ENCODE measurements at regions of chr16 and their contacts with region 1.

Region 1: DNA sequence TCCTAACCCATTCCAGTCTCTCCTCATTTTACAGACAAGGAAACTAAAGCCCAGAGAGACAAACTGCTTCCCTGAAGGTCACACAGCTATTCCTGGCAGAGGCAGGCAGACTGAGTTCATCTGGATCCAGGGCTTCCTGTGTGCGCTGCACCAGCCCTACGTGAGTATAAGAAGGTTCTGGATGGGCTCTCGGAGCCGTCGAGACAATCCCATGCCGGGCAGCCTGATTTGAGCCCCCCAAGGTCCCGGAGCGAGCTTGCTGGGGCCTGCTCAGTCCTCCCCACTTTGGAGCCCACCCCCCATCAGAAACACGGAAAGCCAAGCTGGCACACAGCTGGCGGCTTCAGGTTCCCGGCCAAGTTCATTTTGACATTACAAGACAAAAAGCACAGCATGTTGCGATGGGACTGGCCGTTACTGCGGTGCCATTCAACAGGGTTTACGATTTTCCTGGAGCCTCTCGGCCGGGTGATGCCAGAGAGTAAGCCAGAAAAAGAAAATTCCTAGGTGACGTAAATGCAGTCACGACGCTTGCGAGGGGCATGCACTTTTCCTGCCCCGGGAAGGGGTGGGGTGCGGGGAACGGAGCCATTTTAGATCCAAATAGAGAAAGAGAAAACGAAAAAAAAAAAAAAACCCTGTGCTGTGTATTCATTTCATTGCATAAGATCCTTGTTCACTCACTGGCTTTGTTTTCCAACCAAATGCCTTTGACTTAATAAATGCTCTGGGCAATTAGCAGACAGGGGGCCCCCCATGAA is 167.1 kb upstream of the FOXF1 start:
- DNase-seq: peak; percentile 97
- H3K4me3 ChIP-seq: peak overlapping the region; percentile 1 to 22 (median 8)
- H3K27ac ChIP-seq: peak overlapping the region; percentile 87 to 96 (median 94)
- H3K4me1 ChIP-seq: peaks cover 0 to 43% (median 40%) of the 10 kb centered on the region in 4 donors
- H3K27me3 ChIP-seq: no peaks in the 10 kb centered on the region
- CTCF ChIP-seq: no peak
- EP300 ChIP-seq: peak; percentile 98 to 100 (median 99)
- POLR2A ChIP-seq: no peak

Region 2: GRCh38 chr16:86078121-86078600 is 265.0 kb before region 1 on chr16:
- intact Hi-C with region 1: loop called (anchors 2 kb)
- DNase-seq: peak; percentile 95
- H3K4me3 ChIP-seq: no peak overlapping the region
- H3K27ac ChIP-seq: peak overlapping the region in 3 of 4 donors; percentile 81 to 89 (median 86)
- H3K4me1 ChIP-seq: peaks cover 0 to 24% (median 15%) of the 10 kb centered on the region in 4 donors
- H3K27me3 ChIP-seq: no peaks in the 10 kb centered on the region
- CTCF ChIP-seq: no peak
- EP300 ChIP-seq: peak; percentile 92 to 97 (median 95)
- POLR2A ChIP-seq: no peak

Region 3: DNA sequence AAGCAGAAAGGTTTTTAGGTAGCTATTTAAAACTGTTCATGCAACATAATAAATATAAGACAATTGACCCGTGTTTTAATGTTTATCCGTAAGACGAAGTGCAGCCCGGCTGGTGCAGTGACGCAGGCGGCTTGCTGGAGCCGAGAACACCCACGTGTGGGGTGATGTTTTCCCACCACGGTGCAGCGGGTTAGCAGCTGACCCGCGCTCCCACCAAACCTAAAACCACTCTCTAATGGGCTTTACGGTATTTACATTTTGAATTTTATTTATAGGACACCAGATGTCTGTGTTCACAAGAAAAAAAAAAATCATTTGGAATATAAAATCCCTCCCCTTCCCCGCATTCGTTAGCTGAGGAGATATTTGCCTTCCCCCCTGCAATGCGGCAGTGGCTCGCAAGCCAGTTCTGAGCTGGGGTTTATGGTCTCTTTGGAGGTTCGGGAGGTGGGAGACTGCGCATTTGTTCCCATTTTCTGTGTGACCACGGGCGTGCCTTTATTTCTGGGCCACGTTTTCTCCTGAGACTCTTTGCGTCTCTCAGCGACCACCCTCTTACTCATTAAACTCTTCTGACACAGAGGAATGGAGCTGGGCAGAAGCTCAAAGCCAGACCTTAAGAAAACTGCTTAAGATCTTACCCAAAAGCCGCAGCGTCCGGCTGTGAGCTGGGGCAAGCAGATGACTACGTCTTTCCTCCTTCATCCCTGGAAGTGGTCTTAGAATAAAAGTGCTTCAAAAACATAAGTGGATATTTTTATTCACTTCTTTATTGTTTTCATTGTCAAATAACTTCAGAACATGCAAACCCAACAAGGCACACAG is 143.1 kb before region 1 on chr16:
- intact Hi-C with region 1: loop called (anchors 2 kb)
- DNase-seq: peak; percentile 96
- H3K4me3 ChIP-seq: peak overlapping the region; percentile 12 to 43 (median 32)
- H3K27ac ChIP-seq: peak overlapping the region; percentile 87 to 96 (median 92)
- H3K4me1 ChIP-seq: peaks cover 0 to 54% (median 47%) of the 10 kb centered on the region in 4 donors
- H3K27me3 ChIP-seq: no peaks in the 10 kb centered on the region
- CTCF ChIP-seq: no peak
- EP300 ChIP-seq: peak; percentile 95 to 99 (median 98)
- POLR2A ChIP-seq: no peak

Region 4: DNA sequence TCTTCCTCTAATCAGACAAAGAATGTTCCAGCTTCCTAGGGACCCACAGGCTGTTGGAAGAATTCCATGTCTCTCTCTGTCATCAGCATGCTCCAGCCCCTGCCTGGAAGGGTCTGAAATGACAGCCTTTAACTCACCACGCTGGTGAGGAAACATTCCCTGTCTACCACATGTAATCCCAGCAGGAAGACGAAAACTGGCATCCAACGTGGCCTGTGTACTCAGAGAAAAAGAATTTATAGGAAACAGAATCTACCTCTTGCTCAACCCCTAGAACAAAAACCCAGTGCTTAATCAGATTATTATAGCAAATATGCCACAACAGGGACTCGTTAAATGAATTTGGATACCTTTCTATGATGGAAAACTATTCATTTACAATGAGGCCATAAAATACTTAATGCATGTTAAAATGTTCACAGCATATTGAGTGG is 19.9 kb after region 1 on chr16:
- intact Hi-C with region 1: loop called (anchors 1 kb)
- DNase-seq: peak; percentile 88
- H3K4me3 ChIP-seq: no peak overlapping the region
- H3K27ac ChIP-seq: peak overlapping the region; percentile 83 to 89 (median 85)
- H3K4me1 ChIP-seq: peaks cover 0 to 56% (median 46%) of the 10 kb centered on the region in 4 donors
- H3K27me3 ChIP-seq: no peaks in the 10 kb centered on the region
- CTCF ChIP-seq: no peak
- EP300 ChIP-seq: peak in 3 of 4 donors; percentile 25 to 84 (median 52)
- POLR2A ChIP-seq: no peak

Region 5: DNA sequence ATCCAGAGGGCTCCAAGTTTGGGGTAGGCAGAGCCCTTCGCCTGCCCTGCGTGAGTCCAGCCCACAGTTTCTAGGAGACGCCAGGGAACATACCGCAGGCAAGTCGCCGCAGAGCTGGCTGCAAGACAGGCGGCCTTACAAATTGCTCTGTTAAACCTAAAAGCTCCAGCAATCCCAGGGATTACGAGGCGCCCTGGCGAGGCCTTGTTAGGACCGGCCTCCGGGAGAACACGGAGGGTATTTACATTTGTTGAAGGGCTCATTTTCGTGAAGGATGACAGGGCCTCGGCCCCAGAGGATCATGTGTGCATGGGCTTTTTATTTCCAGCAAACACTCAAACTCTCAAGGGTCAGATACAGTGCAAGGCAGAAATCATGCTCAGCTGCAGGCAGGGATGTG is 89.5 kb after region 1 on chr16:
- intact Hi-C with region 1: loop called (anchors 2 kb)
- DNase-seq: peak; percentile 95
- H3K4me3 ChIP-seq: no peak overlapping the region
- H3K27ac ChIP-seq: peak overlapping the region; percentile 81 to 91 (median 87)
- H3K4me1 ChIP-seq: peaks cover 0 to 67% (median 61%) of the 10 kb centered on the region in 4 donors
- H3K27me3 ChIP-seq: no peaks in the 10 kb centered on the region
- CTCF ChIP-seq: no peak
- EP300 ChIP-seq: peak; percentile 81 to 97 (median 86)
- POLR2A ChIP-seq: no peak

Measured in sigmoid colon (tissue), 7 donors.